ENCODE measurements at regions of chr17 and their contacts with region 1.

Region 1: GRCh38 chr17:47644324-47644723 is 5.4 kb upstream of the KPNB1 start:
- DNase-seq: no peak
- H3K4me3 ChIP-seq: no peak overlapping the region
- H3K27ac ChIP-seq: no peak overlapping the region
- H3K27me3 ChIP-seq: no peaks in the 10 kb centered on the region
- CTCF ChIP-seq: no peak

Region 2: GRCh38 chr17:47621293-47622178 is 22.8 kb before region 1 on chr17:
- CTCF ChIA-PET with region 1: interaction called, 5 read pairs
- POLR2A ChIA-PET with region 1: interaction called, 11 read pairs
- DNase-seq: peak; percentile 69
- H3K4me3 ChIP-seq: no peak overlapping the region; the same call in 1 of the 2 replicates
- H3K27ac ChIP-seq: peak overlapping the region; percentile 85
- H3K27me3 ChIP-seq: no peaks in the 10 kb centered on the region
- CTCF ChIP-seq: no peak